PC-3 (cell line): ENCODE measurements at regions of chr16 and their contacts with region 1.

Region 1: DNA sequence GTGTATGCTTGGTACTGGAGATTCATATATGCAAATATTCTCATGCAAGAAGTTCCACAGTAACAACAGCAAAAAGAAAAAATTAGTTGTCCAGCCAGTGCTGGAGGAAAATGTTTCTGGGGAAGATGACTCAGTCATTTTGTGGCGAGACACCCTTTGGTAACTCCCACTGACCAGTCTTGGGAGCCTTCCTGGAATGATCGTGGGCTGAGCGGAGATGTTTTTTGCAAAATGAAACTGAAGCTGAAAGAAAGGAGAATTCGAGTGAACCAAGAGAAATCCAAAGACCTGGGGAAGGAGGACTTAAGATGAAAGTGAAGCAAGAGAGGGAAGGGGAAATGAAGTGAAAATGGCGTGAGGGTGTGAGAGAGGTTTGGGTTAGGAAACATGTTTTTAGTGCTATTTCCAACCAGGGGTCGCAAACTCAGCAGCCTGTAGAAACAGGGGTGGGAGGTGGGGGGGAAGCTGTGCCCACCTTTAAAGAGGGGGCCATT is 5.2 kb downstream of the ITPRIPL2 start:
- DNase-seq: peak; percentile 76
- ATAC-seq: peak; percentile 43
- H3K4me3 ChIP-seq: peak overlapping the region; percentile 65
- H3K27ac ChIP-seq: peak overlapping the region; percentile 95
- H3K4me1 ChIP-seq: peaks cover 67% of the 10 kb centered on the region
- H3K27me3 ChIP-seq: no peaks in the 10 kb centered on the region
- CTCF ChIP-seq: no peak

Region 2: DNA sequence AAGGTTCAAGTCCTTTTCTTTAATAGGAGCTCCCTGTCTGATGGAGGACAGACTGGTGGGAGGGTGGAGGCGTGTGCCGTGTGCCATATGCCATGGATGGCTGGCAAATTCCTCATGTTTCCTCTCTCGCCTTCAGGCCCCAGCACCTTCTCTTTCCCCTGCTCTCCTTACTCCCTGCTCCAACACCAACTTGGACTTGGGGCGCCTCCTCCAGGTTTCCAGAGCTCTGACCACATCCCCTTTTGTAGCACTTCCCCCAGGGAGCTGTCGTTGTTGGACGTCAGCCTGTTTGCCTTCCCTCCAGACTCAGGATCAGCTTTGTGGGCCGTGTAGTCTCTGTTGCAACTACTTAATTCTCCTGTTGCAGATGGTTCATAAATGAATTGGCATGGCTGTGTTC is 104.5 kb before region 1 on chr16:
- CTCF ChIA-PET with region 1: no interaction called
- POLR2A ChIA-PET with region 1: no interaction called
- intact Hi-C with region 1: no loop called
- DNase-seq: no peak
- ATAC-seq: no peak
- H3K4me3 ChIP-seq: no peak overlapping the region
- H3K27ac ChIP-seq: no peak overlapping the region
- H3K4me1 ChIP-seq: no peaks in the 10 kb centered on the region
- H3K27me3 ChIP-seq: no peaks in the 10 kb centered on the region
- CTCF ChIP-seq: 0 out of 2 replicates have a peak, but pooled peaks have one; percentile 20

Region 3: DNA sequence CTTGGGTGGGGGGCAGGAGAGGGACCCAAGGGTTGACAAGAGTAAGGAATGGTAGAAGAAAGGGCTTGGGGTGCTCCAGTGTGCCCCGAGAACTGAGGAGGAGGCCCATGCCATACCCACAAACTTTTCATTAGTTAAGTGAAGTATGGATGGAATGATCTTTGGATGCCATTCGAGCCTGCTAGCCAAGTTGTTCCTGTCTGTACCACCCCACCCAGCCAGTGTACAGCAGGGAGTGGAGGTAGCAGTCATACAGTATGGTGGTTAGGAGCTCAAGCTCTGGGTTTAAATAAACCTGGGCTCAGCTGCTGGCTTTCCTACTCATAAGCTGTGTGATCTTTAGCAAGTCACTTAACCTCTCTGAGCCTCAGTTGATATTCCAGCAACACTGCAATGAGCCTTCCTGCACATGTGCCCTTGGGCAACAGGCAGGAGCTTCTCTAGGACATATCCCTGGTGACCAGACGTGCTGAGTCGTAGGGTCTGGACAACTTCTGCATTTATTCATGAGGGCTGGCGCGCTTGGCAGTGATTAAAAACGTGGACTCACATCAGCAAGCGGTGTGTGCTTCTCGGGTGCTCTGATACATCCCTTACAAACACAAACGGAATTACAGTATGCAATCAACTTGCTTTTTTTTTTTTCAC is 17.7 kb after region 1 on chr16:
- CTCF ChIA-PET with region 1: no interaction called
- POLR2A ChIA-PET with region 1: no interaction called
- intact Hi-C with region 1: loop called (anchors 2 kb)
- DNase-seq: peak; percentile 13
- ATAC-seq: peak; percentile 38
- H3K4me3 ChIP-seq: peak overlapping the region; percentile 56
- H3K27ac ChIP-seq: peak overlapping the region; percentile 97
- H3K4me1 ChIP-seq: peaks cover 43% of the 10 kb centered on the region
- H3K27me3 ChIP-seq: no peaks in the 10 kb centered on the region
- CTCF ChIP-seq: no peak